ENCODE measurements at regions of chr5 and their contacts with region 1.

Region 1: DNA sequence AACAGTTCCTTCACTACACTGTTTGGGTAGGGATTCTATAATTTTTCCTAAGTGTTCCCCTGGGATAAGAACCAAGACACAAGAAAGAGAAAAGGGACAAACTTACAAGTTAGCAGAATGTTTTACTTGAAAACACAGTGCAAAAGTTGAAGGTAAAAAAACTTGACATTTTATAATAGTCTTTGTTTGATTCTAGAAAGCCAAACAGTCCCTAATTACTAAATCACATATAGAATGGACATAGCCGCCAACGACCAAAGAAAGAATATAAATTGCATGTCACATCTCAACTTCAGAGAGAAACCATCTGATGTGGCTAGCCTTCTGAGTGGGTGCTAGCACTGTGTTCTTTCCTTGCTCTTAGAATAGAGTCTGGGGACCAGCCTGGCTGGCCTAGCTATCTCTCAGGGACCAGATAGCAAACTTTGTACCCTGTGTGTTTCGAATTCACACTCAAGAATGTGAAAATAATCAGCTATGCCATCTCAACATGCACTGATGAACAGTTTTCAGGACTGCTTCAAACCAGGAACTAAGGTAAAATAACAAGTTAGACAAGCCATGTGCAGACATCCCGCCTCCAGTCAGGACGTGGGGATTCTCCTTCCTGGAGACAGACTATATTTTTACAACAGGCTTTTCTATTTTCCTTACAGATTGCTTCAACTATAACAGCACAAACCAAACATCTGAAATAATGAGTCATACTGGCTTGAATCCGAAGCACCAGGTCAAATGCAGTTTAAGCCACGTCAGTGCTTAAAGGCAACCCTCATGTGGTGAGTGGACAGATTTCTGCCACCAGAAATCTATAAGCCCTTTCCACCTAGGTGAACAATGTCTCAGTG is 53.7 kb downstream of the LHFPL2 start:
- DNase-seq: peak; percentile 100
- ATAC-seq: peak; percentile 71
- H3K4me3 ChIP-seq: no peak overlapping the region
- H3K27ac ChIP-seq: peak overlapping the region; percentile 81
- H3K4me1 ChIP-seq: peaks cover 40% of the 10 kb centered on the region
- H3K27me3 ChIP-seq: no peaks in the 10 kb centered on the region
- CTCF ChIP-seq: 0 out of 2 replicates have a peak, but pooled peaks have one; percentile 17
- POLR2A ChIP-seq: peak; percentile 61
- RAD21 ChIP-seq: peak; percentile 11; the same call in 1 of the 2 replicates

Region 2: GRCh38 chr5:78509884-78510769 is 84.7 kb before region 1 on chr5:
- CTCF ChIA-PET with region 1: interaction called, 3 read pairs
- POLR2A ChIA-PET with region 1: no interaction called
- dilution Hi-C with region 1: no loop called
- in situ Hi-C with region 1: loop called (anchors 10 kb)
- intact Hi-C with region 1: loop called (anchors 5 kb)
- DNase-seq: no peak
- ATAC-seq: peak; percentile 34
- H3K4me3 ChIP-seq: peak overlapping the region; percentile 9
- H3K27ac ChIP-seq: 0 out of 2 replicates have a peak overlapping the region, but pooled peaks have one; percentile 11
- H3K4me1 ChIP-seq: peaks cover 41% of the 10 kb centered on the region
- H3K27me3 ChIP-seq: no peaks in the 10 kb centered on the region
- CTCF ChIP-seq: no peak
- POLR2A ChIP-seq: no peak
- RAD21 ChIP-seq: no peak

Region 3: DNA sequence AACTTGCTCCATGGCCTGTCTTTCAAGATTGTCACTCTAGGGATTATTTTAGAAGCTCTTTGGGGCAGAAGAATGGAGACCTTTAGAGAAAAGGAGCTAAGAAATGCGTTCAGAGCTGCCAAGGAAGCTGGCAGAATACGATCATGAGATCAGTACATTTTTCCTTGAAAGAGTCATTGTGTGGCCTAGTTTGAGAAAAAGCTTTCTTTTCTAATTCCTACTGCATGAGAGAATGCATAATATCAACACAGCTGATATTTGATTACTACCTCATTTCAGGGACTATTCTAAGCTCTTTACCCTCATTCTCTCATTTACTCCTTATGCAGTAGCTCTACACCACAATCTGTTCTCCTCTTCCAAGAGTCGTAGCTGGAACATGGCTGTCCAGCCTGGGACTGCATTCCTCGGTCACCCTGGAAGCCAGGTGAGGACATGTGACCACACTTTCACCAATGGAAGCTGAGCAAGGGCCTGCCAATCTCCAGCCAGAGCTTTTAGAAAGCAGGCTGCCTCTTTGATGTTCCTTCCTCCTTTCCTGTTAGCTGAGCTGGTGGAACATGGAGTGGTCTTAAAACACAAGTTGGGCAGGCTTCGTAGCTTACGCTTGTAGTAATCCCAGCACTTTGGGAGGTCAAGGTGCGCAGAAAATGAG is 153.0 kb after region 1 on chr5:
- CTCF ChIA-PET with region 1: no interaction called
- POLR2A ChIA-PET with region 1: no interaction called
- dilution Hi-C with region 1: no loop called
- in situ Hi-C with region 1: no loop called
- intact Hi-C with region 1: loop called (anchors 1 kb)
- DNase-seq: peak; percentile 94
- ATAC-seq: peak; percentile 92
- H3K4me3 ChIP-seq: no peak overlapping the region
- H3K27ac ChIP-seq: peak overlapping the region; percentile 94
- H3K4me1 ChIP-seq: peaks cover 17% of the 10 kb centered on the region
- H3K27me3 ChIP-seq: peaks cover 6% of the 10 kb centered on the region; the same call in 1 of the 2 replicates
- CTCF ChIP-seq: no peak
- POLR2A ChIP-seq: no peak
- RAD21 ChIP-seq: 0 out of 2 replicates have a peak, but pooled peaks have one; percentile 15

Measured in IMR-90 (cell line).